Mammary epithelial cell (primary cell): ENCODE measurements at regions of chr17 and their contacts with region 1.

Region 1: GRCh38 chr17:64320613-64321553 is 57.8 kb upstream of the TEX2 start:
- DNase-seq: peak; percentile 62
- H3K4me3 ChIP-seq: no peak overlapping the region
- H3K27ac ChIP-seq: no peak overlapping the region
- H3K4me1 ChIP-seq: no peaks in the 10 kb centered on the region
- H3K27me3 ChIP-seq: no peaks in the 10 kb centered on the region
- CTCF ChIP-seq: peak; percentile 74 to 80

Region 2: GRCh38 chr17:64373722-64374121 is 52.8 kb after region 1 on chr17:
- CTCF ChIA-PET with region 1: no interaction called
- dilution Hi-C with region 1: loop called (anchors 5 kb)
- in situ Hi-C with region 1: no loop called
- intact Hi-C with region 1: no loop called
- DNase-seq: no peak
- H3K4me3 ChIP-seq: no peak overlapping the region
- H3K27ac ChIP-seq: no peak overlapping the region
- H3K4me1 ChIP-seq: no peaks in the 10 kb centered on the region
- H3K27me3 ChIP-seq: no peaks in the 10 kb centered on the region
- CTCF ChIP-seq: no peak

Region 3: GRCh38 chr17:64491034-64491859 is 170.4 kb after region 1 on chr17:
- CTCF ChIA-PET with region 1: interaction called, 3 read pairs
- dilution Hi-C with region 1: no loop called
- in situ Hi-C with region 1: no loop called
- intact Hi-C with region 1: loop called (anchors 5 kb)
- DNase-seq: no peak
- H3K4me3 ChIP-seq: no peak overlapping the region
- H3K27ac ChIP-seq: no peak overlapping the region
- H3K4me1 ChIP-seq: peaks cover 11% of the 10 kb centered on the region
- H3K27me3 ChIP-seq: no peaks in the 10 kb centered on the region
- CTCF ChIP-seq: peak; percentile 60 to 70

Region 4: DNA sequence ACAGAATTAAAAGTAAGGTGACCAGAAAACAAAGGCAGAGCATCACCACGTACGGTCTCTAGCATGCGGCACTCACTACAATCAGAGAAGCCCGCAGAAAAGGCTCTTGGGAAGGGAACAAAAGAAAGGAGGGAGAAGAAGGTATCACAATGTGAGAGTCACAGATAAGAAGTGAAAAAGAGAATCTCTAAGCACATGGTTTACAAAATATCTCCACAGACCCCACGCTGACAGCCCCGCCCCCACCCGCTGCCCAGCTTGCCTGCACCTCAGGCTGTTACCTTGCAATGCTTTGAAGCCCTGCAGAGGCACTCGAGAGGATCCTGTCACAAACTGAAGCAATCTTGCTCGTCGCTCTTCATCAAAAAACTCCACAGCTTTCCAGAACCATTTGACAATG is 226.4 kb after region 1 on chr17:
- CTCF ChIA-PET with region 1: no interaction called
- dilution Hi-C with region 1: no loop called
- in situ Hi-C with region 1: no loop called
- intact Hi-C with region 1: no loop called
- DNase-seq: no peak
- H3K4me3 ChIP-seq: no peak overlapping the region
- H3K27ac ChIP-seq: no peak overlapping the region
- H3K4me1 ChIP-seq: no peaks in the 10 kb centered on the region
- H3K27me3 ChIP-seq: no peaks in the 10 kb centered on the region
- CTCF ChIP-seq: no peak